HCT116 (cell line): ENCODE measurements at regions of chr4 and their contacts with region 1.

Region 1: GRCh38 chr4:119628308-119629141 is at the start of gene PDE5A:
- DNase-seq: peak; percentile 70
- ATAC-seq: peak; percentile 84
- H3K4me3 ChIP-seq: peak within 1 kb of the TSS; percentile 65 to 78
- H3K27ac ChIP-seq: peak within 1 kb of the TSS; percentile 33; the same call in 1 of the 2 replicates
- H3K4me1 ChIP-seq: peaks cover 0 to 21% of the 10 kb centered on the region in 2 experiments; a peak in 1 of 4 replicates
- H3K27me3 ChIP-seq: no peaks in the 10 kb centered on the region
- CTCF ChIP-seq: peak; percentile 73 to 85 (median 74)
- POLR2A ChIP-seq: no peak
- RAD21 ChIP-seq: peak; percentile 90
- total RNA-seq, gene PDE5A: 5.0 TPM

Region 2: DNA sequence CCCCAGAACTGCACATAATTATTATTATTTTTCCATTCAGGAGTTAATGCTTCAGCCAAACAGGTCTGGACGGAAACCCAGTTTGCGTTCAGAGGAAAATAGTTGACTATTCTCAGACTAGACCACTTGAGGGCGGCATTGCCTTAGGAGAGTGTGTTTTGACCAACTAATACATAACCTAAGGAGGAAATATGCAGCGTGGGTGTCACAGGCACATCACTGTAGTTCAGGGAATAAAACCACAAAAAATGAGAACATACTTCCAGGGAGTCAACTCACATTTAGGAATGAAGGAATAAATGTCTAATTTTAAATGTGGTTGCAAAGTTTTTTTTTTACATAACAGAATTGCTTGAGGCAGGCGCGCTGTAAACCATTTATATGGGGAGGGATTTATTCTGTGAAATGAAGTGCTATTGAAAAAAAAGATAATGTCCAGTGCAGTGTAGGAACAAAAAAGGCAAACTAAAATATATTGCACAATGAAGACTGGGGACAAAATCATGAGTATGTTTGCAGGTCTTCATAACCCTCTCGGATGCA is 646.6 kb before region 1 on chr4:
- CTCF ChIA-PET with region 1: interaction called, 3 read pairs
- POLR2A ChIA-PET with region 1: no interaction called
- RAD21 ChIA-PET with region 1: no interaction called
- intact Hi-C with region 1: loop called (anchors 1 kb)
- DNase-seq: peak; percentile 55
- ATAC-seq: peak; percentile 95
- H3K4me3 ChIP-seq: no peak overlapping the region
- H3K27ac ChIP-seq: no peak overlapping the region
- H3K4me1 ChIP-seq: peaks cover 0 to 7% of the 10 kb centered on the region in 2 experiments; a peak in 1 of 4 replicates
- H3K27me3 ChIP-seq: no peaks in the 10 kb centered on the region
- CTCF ChIP-seq: peak; percentile 57 to 85 (median 82); a peak in 5 of 6 replicates
- POLR2A ChIP-seq: no peak
- RAD21 ChIP-seq: peak; percentile 97

Region 3: DNA sequence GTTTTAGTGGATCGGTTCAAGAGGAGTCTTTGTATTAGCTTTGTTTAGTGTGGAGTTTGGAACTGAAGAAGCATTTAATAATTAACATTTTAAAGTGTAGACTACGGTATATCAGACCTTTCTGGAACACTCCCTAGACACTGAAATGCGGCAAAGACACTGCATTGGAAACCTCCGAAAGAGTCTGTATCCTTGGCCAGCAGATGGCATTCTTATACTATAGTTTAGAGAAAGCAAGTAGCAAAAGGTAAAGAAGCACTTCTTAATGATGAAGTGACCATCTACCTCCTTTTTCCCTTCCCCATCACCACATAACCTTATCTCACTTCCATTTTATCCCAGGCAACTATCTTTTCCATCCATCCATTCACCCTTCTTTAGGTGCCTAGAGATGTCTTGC is 314.2 kb before region 1 on chr4:
- CTCF ChIA-PET with region 1: interaction called, 3 read pairs
- POLR2A ChIA-PET with region 1: no interaction called
- RAD21 ChIA-PET with region 1: no interaction called
- intact Hi-C with region 1: loop called (anchors 1 kb)
- DNase-seq: no peak
- ATAC-seq: peak; percentile 75
- H3K4me3 ChIP-seq: no peak overlapping the region
- H3K27ac ChIP-seq: no peak overlapping the region
- H3K4me1 ChIP-seq: no peaks in the 10 kb centered on the region
- H3K27me3 ChIP-seq: no peaks in the 10 kb centered on the region
- CTCF ChIP-seq: peak; percentile 29 to 47 (median 42); a peak in 4 of 6 replicates
- POLR2A ChIP-seq: no peak
- RAD21 ChIP-seq: peak; percentile 70

Region 4: DNA sequence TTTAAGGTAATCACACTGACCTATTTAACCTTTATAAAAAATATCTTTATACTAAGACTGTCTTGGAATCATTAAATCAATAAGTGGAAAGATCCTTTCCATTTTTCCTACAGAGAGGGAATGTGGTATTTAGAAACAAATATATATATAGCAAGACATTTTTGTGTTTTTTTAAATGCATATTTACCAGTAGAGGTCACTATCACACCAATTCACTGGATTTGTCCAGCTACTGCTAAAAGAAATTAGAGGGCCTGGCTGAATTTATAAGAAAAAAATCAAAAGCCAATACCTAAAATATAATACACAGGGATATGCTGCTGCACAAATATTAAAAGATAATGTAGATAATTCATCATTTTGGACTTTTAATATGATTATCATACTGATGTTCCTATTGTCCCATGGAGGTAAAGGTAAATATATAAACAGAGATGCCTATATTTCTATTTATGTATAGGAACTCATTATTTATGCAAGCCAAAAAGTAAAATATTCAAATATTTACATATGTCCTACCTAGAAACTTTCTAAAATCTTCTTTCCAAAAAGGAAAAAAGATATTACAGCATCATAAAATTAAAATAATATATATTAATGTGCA is 69.4 kb before region 1 on chr4:
- CTCF ChIA-PET with region 1: interaction called, 19 read pairs
- POLR2A ChIA-PET with region 1: no interaction called
- RAD21 ChIA-PET with region 1: no interaction called
- intact Hi-C with region 1: loop called (anchors 2 kb)
- DNase-seq: peak; percentile 12
- ATAC-seq: peak; percentile 53; the same call in 1 of the 2 replicates
- H3K4me3 ChIP-seq: no peak overlapping the region
- H3K27ac ChIP-seq: no peak overlapping the region
- H3K4me1 ChIP-seq: no peaks in the 10 kb centered on the region
- H3K27me3 ChIP-seq: no peaks in the 10 kb centered on the region
- CTCF ChIP-seq: peak; percentile 28 to 65 (median 51); a peak in 4 of 6 replicates
- POLR2A ChIP-seq: no peak
- RAD21 ChIP-seq: peak; percentile 60

Region 5: GRCh38 chr4:119785963-119786362 is 157.4 kb after region 1 on chr4:
- CTCF ChIA-PET with region 1: interaction called, 19 read pairs
- POLR2A ChIA-PET with region 1: no interaction called
- RAD21 ChIA-PET with region 1: no interaction called
- intact Hi-C with region 1: loop called (anchors 2 kb)
- DNase-seq: peak; percentile 13
- ATAC-seq: no peak
- H3K4me3 ChIP-seq: no peak overlapping the region
- H3K27ac ChIP-seq: no peak overlapping the region
- H3K4me1 ChIP-seq: no peaks in the 10 kb centered on the region
- H3K27me3 ChIP-seq: no peaks in the 10 kb centered on the region
- CTCF ChIP-seq: peak; percentile 38 to 55 (median 55); a peak in 5 of 6 replicates
- POLR2A ChIP-seq: no peak
- RAD21 ChIP-seq: peak; percentile 72

Region 6: DNA sequence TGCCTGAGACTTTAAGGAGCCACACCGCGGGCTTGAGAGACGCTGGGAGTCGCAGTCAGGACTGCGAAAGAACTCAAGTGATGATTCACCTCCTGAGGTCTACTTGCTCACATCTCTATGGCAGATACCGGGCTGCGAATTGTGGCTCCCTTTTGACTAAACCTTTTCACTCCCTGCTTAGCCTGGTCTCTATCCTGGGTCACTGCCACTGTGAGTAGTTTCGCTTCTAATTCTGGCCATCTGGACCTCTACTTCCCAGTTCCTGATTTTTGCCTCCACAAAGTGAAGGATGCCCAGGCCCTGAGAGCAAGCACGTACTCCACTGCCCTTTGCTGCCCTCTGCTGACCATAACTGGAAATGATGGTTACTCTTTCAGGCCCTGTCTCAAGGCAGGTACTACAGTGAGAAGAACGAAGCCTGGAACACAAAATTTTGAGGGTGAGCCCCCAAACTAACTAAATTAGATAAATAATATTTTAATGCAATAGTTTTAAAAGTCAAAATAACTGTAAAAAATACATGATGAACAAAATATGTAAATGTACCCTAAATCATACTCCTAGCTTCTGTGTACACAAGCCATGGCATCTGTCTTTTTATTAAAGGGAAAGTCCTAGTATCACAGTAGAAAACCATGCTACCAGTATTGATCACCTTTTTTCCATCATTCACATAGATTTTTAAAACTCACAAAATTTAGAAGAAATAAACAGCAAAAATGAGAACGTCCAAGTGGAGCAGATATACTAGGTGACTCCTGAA is 421.4 kb after region 1 on chr4:
- CTCF ChIA-PET with region 1: interaction called, 22 read pairs
- POLR2A ChIA-PET with region 1: no interaction called
- RAD21 ChIA-PET with region 1: no interaction called
- intact Hi-C with region 1: loop called (anchors 1 kb)
- DNase-seq: peak; percentile 52
- ATAC-seq: peak; percentile 98
- H3K4me3 ChIP-seq: no peak overlapping the region
- H3K27ac ChIP-seq: no peak overlapping the region
- H3K4me1 ChIP-seq: peaks cover 0 to 4% of the 10 kb centered on the region in 2 experiments; a peak in 2 of 4 replicates
- H3K27me3 ChIP-seq: no peaks in the 10 kb centered on the region
- CTCF ChIP-seq: peak; percentile 65 to 77 (median 76)
- POLR2A ChIP-seq: no peak
- RAD21 ChIP-seq: peak; percentile 91

Region 7: DNA sequence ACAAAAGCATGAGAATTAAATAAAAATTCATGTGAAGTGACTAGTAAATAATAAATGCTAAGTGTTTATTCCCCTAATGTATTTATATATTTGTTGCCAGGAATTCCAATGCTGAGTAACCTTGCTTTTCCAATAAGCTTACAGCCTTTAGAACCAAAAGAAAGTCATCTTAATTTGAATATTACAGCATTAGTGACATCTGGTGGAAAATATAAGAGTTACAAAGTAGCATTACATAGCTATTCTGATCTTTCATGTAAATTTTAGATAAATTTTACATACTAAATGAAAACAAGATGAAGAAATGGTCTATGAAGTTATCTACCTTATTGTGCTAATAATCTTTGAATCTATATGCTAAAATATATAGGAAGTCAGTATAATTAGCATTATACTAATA is 427.7 kb after region 1 on chr4:
- CTCF ChIA-PET with region 1: interaction called, 22 read pairs
- POLR2A ChIA-PET with region 1: no interaction called
- RAD21 ChIA-PET with region 1: interaction called in 1 of 2 experiments, 3 read pairs
- intact Hi-C with region 1: no loop called
- DNase-seq: no peak
- ATAC-seq: no peak
- H3K4me3 ChIP-seq: no peak overlapping the region
- H3K27ac ChIP-seq: no peak overlapping the region
- H3K4me1 ChIP-seq: no peaks in the 10 kb centered on the region
- H3K27me3 ChIP-seq: no peaks in the 10 kb centered on the region
- CTCF ChIP-seq: peak in 2 of 3 experiments; percentile 18 to 36; a peak in 2 of 6 replicates
- POLR2A ChIP-seq: no peak
- RAD21 ChIP-seq: peak; percentile 45